Motor neuron (in vitro differentiated cells): ENCODE measurements at regions of chr7 and their contacts with region 1.

Region 1: DNA sequence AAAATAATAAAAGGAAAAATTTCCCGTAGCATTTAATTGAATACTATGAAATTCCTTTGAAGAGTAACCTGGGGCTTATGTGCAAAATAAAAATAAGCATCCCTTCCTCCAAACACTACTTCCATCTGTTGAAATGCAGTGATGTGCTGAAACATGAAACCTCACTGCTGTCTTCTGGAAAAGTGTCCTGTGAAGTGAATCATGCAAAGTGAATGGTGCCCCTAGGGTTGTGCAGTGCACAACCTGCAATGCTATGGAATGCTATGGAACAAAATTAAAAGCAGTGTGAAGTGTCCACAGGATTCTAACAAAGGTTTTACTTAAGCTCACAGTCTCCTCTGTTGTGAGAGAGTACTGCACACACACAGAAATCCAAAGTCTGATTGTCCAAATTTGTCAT is 480.9 kb downstream of the ETV1 start:
- ATAC-seq: peak in 2 of 8 experiments; percentile 13 to 48
- H3K4me3 ChIP-seq: no peak overlapping the region
- H3K27ac ChIP-seq: no peak overlapping the region
- H3K4me1 ChIP-seq: no peaks in the 10 kb centered on the region

Region 2: DNA sequence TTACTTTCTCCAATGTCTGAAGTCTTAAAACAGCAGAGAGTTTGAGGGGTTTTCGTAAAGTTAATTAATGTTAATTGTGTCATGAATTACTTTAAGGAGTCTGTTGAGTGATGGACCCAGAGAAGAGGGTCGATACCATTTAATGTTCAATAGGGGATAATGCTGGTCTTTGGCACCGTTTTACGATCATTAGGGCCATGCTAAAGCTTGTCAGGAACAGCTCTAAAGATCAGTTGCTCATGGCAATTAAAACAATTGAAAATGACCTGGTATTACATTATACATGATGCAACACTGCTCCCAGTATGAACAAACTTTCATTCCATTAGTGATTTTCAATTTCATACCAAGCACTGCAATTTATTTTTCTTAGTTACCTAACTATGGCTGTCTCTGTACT is 184.0 kb after region 1 on chr7:
- in situ Hi-C with region 1: no loop called
- ATAC-seq: peak in 3 of 8 experiments; percentile 76 to 92 (median 80)
- H3K4me3 ChIP-seq: no peak overlapping the region
- H3K27ac ChIP-seq: no peak overlapping the region
- H3K4me1 ChIP-seq: no peaks in the 10 kb centered on the region

Region 3: GRCh38 chr7:13742811-13743210 is 234.2 kb after region 1 on chr7:
- in situ Hi-C with region 1: loop called in 1 of 9 experiments (anchors 25 kb)
- ATAC-seq: peak in 4 of 8 experiments; percentile 50 to 73 (median 61)
- H3K4me3 ChIP-seq: no peak overlapping the region
- H3K27ac ChIP-seq: no peak overlapping the region
- H3K4me1 ChIP-seq: no peaks in the 10 kb centered on the region